Activated CD8-positive, alpha-beta memory T cell treated with anti-CD3 and anti-CD28 coated beads, Interleukin-2, amount 10 ng/mL, durations not matched to agents 7 days and 5 days (primary cell): ENCODE measurements at regions of chr7 and their contacts with region 1.

Region 1: GRCh38 chr7:107661081-107661864 is 645 bp downstream of the SLC26A4 start:
- DNase-seq: peak; percentile 74
- ATAC-seq: peak; percentile 62
- H3K4me3 Mint-ChIP-seq: peak overlapping the region; percentile 97
- H3K27ac Mint-ChIP-seq: peak overlapping the region; percentile 90
- H3K4me1 Mint-ChIP-seq: peaks cover 62% of the 10 kb centered on the region
- H3K27me3 Mint-ChIP-seq: peaks cover 2% of the 10 kb centered on the region

Region 2: DNA sequence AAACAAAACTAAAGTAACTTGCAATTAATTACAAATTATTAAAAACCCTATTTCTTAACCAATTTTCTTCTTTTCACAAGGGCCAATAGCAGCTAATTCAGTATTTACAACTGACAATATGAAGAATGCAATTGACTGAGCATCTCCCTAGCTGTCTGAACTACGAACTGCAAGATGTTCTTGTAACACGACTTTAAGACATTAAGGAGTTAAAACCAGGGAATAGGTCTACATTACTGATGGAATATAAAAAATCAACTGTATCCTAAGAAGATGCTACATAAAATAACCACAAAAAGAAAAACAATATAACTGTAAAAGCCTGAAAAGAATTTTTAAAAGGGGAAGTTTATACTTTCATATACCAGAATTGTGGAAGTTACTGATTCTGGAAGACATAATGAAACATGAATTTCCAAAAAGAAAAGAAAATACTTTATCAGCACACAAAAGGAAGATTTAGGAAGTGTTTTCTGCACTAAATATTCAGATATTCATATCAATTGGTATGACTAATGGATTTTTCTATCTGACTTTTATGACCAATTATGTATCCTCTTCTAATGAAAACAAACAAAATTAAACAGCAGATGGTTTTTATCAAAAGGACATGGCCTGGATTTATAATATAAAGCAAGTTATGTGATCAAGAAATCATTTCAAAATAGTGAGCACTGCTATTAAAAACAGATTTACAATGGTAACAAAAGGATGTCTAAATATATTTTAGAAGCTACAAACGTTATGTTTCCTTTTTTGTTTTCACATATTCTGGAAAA is 189.8 kb before region 1 on chr7:
- CTCF ChIA-PET with region 1: no interaction called
- DNase-seq: no peak
- ATAC-seq: no peak
- H3K4me3 Mint-ChIP-seq: no peak overlapping the region
- H3K27ac Mint-ChIP-seq: no peak overlapping the region
- H3K4me1 Mint-ChIP-seq: no peaks in the 10 kb centered on the region
- H3K27me3 Mint-ChIP-seq: no peaks in the 10 kb centered on the region

Region 3: DNA sequence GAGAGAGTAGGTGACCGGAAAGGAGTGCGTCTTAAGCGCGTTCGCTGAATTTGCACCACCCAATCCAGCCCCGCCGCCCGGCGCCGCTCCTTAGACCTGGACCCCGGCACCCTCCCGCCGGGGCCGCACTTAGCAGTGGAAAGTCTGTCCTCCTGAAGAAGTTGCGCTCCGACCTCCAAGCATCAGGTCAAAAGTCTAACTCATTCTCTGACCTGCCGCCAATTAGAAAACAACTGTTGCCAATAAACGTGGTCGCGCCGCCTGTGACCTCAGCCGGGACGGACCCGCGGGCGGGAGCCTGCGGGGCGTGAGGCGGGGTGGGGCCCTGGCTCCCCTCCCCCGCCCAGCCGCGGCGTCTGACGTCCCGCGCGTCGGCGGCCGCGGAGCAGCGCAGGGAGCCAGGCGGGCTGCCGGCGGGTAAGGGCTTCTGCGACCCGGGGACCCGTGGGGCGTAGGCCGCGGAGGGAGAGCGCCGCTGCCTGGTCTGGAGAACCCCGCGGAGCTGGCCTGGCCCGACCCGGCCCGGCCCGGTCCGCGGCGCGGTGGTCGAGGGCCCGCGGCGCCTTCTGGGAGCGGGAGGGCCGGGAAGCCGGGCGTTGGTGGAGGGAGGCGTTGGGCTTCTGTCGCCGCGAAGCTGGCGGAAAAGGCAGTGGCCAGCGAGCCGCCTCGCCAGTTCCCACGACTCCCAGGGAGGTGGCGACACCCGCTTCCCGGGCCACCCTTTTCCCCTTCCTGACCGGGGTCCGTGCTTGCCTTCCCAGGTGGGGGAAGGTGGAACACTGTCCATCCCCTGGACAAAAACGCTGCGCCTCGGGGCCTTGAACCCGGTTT is 81.2 kb before region 1 on chr7 and contains the start of gene BCAP29:
- CTCF ChIA-PET with region 1: interaction called, 10 read pairs
- DNase-seq: peak; percentile 80
- ATAC-seq: peak; percentile 96
- H3K4me3 Mint-ChIP-seq: peak within 1 kb of the TSS; percentile 90
- H3K27ac Mint-ChIP-seq: peak within 1 kb of the TSS; percentile 93
- H3K4me1 Mint-ChIP-seq: peaks cover 32% of the 10 kb centered on the region
- H3K27me3 Mint-ChIP-seq: no peaks in the 10 kb centered on the region
- total RNA-seq, gene BCAP29: 42.7 to 47.1 TPM

Region 4: DNA sequence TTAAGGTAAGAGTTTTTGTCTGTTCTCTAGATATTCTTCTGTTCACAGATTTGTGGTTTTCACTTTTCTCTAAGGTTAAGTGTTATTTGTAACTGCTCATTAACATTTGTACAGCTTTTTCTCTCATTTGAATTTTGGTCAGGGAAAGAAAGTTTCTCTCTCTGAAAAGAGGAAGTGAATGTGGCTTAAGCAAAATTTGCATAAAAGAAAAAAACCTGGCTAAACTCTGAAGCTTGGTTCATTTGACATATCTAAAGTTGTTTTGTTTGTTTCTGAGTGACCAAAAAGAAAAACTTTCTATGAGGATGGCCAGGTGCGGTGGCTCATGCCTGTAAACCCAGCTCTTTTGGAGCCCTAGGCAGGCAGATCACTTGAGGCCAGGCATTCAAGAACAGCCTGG is 22.7 kb before region 1 on chr7:
- CTCF ChIA-PET with region 1: interaction called, 12 read pairs
- DNase-seq: no peak
- ATAC-seq: no peak
- H3K4me3 Mint-ChIP-seq: no peak overlapping the region
- H3K27ac Mint-ChIP-seq: peak overlapping the region; percentile 63
- H3K4me1 Mint-ChIP-seq: peaks cover 28% of the 10 kb centered on the region
- H3K27me3 Mint-ChIP-seq: peaks cover 20% of the 10 kb centered on the region

Region 5: DNA sequence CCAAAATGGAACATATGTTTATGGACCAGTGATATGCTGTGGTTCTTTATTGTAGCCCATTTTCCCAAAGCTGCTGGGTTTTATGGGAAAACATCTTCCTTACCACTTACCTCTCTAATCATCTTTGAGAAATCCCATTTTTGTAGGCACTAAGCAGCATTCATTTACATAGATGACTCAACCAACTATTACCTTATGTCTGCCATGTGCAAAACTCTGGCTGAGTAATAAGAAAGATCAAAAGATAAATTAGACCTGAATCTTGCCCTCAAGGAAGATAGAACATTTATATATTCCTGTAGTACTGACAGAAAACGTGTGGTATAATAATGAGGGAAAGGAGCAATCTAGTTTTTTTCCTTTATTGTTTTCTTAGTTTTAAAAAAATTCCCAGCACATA is 107.0 kb after region 1 on chr7:
- CTCF ChIA-PET with region 1: no interaction called
- DNase-seq: no peak
- ATAC-seq: no peak
- H3K4me3 Mint-ChIP-seq: no peak overlapping the region
- H3K27ac Mint-ChIP-seq: no peak overlapping the region
- H3K4me1 Mint-ChIP-seq: peaks cover 6% of the 10 kb centered on the region
- H3K27me3 Mint-ChIP-seq: no peaks in the 10 kb centered on the region